Posterior vena cava (tissue), 2 donors: ENCODE measurements at regions of chrX and their contacts with region 1.

Region 1: DNA sequence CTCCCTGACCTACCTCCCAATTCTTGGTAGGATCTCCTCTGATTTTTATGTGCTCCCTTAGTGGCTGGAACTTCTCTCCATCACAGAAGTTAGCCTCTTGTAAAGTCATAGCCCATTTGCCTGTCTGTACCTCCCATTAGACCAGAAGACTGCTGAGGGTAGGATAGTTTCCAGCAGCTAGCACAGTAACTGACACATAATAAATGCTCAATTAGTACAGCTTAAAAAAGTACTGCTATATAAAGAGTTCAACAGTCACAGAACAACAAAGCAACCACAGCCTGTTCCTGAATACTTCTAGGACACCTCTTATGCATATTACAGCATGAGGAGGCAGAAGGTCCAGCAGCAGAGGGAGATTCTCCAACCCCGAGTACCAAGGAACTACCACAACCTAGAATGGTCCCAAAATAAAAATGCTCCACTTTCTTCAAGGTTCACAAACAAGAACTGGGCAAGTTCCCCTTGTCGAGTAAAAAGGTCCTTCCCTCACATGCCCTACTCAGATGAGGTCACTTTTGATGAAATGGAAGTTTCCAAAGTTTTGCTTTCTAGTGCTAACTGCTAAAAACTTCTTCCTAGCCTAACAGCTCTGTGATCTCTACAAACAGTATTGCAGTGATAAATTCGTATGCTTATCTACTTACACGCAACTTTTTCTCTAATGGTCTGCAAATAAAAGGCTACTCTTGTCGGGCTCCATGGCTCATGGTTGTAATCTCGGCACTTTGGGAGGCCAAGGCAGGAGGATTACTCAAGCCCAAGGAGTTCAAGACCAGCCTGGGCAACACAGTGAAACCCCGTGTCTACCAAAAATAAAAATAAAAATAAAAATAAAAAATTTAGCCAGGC is 12.8 kb downstream of the MECP2 start:
- DNase-seq: no peak

Region 2: DNA sequence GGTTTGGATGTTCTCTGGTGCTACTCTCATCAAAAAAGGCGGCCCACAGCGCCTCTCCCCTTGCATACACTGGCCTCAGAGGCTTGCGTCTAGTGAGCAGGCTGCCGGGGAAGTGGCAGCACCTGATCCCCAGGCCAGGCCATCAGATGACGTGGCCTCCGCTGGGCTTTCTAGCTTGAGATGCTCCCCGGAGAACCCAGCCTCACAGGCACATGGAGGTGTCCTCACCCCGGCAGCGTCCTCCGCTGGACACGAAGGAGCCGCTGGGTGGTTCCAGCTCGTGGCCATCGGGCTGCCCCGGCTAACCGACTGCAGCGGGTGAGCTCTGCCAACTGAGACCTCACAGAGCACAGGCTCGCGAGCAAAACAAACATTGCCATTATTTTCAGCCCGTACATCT is 77.7 kb before region 1 on chrX:
- intact Hi-C with region 1: loop called in 1 of 2 experiments (anchors 2 kb)
- DNase-seq: peak; percentile 70

Region 3: GRCh38 chrX:154040307-154040756 is 44.3 kb before region 1 on chrX:
- intact Hi-C with region 1: no loop called
- DNase-seq: peak; percentile 62

Region 4: GRCh38 chrX:154074199-154074598 is 10.5 kb before region 1 on chrX:
- intact Hi-C with region 1: no loop called
- DNase-seq: no peak

Region 5: GRCh38 chrX:154142950-154143745 is 58.5 kb after region 1 on chrX:
- intact Hi-C with region 1: no loop called
- DNase-seq: no peak

Region 6: DNA sequence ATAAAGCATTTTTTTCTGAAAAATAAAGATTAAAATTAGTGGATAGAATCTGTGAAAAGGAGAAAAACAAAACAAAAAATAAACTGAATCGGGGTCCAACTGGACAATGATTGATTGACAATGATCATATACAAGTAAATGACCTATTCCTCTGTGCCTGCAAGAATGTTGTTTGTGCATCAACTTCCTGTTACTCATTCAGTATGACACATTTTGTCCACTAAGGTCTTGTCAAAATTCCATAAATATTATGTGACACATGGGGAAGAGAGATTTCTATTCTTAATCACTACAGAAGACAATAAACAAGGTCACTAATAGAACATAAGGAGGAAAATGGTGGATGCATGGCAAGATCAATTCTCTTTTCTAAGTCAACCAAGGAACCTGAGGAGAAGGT is 882.9 kb after region 1 on chrX:
- intact Hi-C with region 1: no loop called
- DNase-seq: no peak